Right ventricle myocardium superior (tissue), 1 donor: ENCODE measurements at regions of chr16 and their contacts with region 1.

Region 1: GRCh38 chr16:23556881-23557778 is at the starts of genes EARS2 and UBFD1:
- DNase-seq: peak; percentile 99
- ATAC-seq: peak; percentile 98
- total RNA-seq, gene EARS2: 20.5 TPM
- total RNA-seq, gene UBFD1: 47.0 TPM

Region 2: GRCh38 chr16:23595951-23596720 is 39.0 kb after region 1 on chr16 and contains the start of gene NDUFAB1:
- intact Hi-C with region 1: loop called (anchors 5 kb)
- DNase-seq: peak; percentile 95
- ATAC-seq: peak; percentile 98
- total RNA-seq, gene NDUFAB1: 585 TPM